Mammary epithelial cell (primary cell): ENCODE measurements at regions of chr12 and their contacts with region 1.

Region 1: DNA sequence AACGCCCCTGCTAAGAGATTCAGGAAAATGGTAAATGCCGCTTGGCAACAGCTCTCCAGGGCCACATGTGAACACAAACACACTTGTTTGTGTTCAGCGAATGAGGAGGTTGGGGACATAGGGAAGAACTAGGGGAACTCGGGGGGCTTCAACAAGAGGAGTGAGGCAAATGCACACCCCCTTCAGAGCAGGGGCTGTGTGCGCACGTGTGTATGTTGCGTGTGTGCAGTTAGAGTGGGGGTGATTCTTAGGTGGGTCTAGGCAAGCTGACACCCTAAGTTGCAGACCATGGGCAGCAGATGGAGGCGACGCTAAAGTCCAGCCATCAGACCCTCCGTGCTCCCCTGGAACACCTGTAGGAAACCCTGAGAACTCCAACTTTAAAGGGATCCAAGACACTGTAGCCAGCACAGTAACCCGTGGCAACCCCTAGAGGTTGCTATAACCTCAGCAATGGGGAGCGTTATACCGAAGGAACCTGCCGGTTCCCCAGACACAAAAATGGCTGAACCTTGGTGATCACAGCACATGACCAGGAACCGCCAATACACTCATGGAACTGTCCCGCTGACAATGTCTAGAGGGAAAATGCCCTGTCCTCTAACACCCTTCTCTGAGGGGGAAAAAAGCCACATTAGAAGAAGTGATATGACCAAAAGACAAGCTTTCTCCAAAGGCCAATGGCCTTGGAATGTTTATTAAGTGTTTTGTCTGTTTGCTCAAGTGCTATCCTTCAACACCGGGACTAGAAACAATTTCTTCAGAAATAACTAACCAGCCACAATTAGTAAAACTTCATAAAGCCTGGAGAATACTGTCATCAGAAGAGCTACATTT is 86.5 kb upstream of the CEP83 start:
- DNase-seq: peak; percentile 65
- H3K4me3 ChIP-seq: no peak overlapping the region
- H3K27ac ChIP-seq: no peak overlapping the region
- H3K4me1 ChIP-seq: peaks cover 5% of the 10 kb centered on the region
- H3K27me3 ChIP-seq: no peaks in the 10 kb centered on the region
- CTCF ChIP-seq: peak; percentile 88 to 95

Region 2: DNA sequence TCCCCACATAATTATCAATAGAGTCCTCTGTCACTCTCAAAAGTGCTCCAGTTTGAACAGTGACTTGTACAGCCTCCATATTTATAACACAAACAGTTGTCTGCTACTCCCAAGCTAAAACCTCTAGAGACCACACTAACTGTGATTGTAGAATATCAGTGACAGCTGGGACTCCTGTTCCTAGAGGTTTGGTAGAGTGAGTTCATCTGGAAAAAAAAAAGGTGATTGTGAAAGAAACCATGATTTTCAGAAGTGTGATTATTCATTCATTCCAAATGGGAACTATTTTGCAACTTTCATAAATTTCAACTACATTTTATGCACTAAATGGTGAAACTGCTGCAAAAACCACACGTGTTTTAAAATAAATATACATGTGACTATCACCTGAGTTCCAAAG is 525.8 kb before region 1 on chr12:
- CTCF ChIA-PET with region 1: no interaction called
- dilution Hi-C with region 1: no loop called
- in situ Hi-C with region 1: no loop called
- intact Hi-C with region 1: no loop called
- DNase-seq: no peak
- H3K4me3 ChIP-seq: no peak overlapping the region
- H3K27ac ChIP-seq: no peak overlapping the region
- H3K4me1 ChIP-seq: no peaks in the 10 kb centered on the region
- H3K27me3 ChIP-seq: no peaks in the 10 kb centered on the region
- CTCF ChIP-seq: no peak

Region 3: DNA sequence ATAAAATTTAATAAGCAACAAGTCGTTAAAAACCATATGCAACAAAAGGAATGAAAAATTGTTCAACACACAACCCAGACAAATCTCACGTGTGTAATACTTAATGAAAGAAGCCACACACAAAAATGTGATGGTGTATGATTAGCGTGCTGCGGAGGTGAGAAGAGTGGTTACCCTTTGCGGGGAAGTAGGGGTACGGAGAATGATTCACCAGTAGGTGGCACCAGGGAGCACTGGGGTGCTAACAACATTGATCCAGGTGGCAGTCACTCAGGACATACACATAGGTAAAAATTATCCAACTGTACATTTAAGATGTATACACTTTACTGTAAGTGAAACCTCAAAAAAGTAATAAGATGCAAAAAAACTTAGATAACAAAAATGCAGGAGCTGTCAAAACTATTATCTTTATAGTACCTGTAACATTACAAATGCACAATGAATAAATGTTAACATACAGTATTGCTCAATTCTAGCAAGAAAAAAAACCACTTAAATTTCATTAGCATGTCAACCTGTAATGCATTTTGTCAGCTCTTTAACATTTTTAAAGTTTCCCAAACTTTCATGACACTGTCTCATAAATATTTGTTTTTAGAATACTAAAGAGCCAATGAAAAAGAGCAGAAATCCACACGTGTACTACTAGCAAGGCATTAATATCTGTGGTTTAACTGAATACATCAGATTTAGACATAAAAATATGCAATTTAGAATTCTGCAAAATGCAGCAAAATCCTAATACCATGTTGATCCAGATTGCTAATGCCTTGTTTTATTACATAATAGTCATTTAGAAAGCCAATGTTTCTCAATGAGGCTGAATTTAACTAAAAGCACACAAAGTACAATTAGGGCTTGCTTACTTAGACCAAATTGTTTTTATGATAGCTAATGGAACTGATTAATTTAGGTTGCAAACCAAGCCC is 57.5 kb after region 1 on chr12:
- CTCF ChIA-PET with region 1: no interaction called
- dilution Hi-C with region 1: no loop called
- in situ Hi-C with region 1: no loop called
- intact Hi-C with region 1: loop called (anchors 5 kb)
- DNase-seq: no peak
- H3K4me3 ChIP-seq: no peak overlapping the region
- H3K27ac ChIP-seq: no peak overlapping the region
- H3K4me1 ChIP-seq: peaks cover 6% of the 10 kb centered on the region
- H3K27me3 ChIP-seq: no peaks in the 10 kb centered on the region
- CTCF ChIP-seq: peak; percentile 62 to 83

Region 4: DNA sequence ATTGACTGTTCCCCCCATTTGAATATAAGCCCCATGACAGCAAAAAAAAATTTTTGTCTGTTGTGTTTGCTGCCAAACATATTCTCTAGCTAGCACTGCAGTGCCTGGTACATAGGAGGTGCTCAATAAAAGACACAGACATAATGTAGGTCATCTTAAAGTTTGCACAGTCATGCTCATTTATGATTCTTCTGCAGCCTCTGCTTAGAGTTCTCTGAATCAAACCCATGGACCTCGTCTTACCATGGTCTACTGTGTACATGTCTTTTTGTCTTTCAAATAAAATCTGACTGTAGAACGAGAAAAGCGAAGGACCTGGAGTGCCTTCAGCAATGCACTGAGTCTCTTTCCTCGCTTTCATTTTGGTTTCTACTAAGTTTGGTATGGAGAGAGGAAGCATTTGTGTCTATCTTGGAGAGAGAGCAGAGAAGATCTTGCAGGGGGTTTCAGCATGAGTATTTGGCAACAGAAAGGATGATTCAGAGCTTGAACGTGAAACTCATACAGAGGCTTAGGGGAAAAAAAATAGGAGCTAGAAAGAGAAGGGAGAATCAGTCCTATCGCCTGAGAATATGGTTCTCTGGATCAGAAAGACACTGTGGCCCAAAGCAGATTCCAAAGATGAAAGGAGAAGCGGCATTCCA is 143.0 kb after region 1 on chr12:
- CTCF ChIA-PET with region 1: no interaction called
- dilution Hi-C with region 1: no loop called
- in situ Hi-C with region 1: no loop called
- intact Hi-C with region 1: no loop called
- DNase-seq: peak; percentile 38
- H3K4me3 ChIP-seq: no peak overlapping the region
- H3K27ac ChIP-seq: no peak overlapping the region
- H3K4me1 ChIP-seq: no peaks in the 10 kb centered on the region
- H3K27me3 ChIP-seq: no peaks in the 10 kb centered on the region
- CTCF ChIP-seq: no peak

Region 5: DNA sequence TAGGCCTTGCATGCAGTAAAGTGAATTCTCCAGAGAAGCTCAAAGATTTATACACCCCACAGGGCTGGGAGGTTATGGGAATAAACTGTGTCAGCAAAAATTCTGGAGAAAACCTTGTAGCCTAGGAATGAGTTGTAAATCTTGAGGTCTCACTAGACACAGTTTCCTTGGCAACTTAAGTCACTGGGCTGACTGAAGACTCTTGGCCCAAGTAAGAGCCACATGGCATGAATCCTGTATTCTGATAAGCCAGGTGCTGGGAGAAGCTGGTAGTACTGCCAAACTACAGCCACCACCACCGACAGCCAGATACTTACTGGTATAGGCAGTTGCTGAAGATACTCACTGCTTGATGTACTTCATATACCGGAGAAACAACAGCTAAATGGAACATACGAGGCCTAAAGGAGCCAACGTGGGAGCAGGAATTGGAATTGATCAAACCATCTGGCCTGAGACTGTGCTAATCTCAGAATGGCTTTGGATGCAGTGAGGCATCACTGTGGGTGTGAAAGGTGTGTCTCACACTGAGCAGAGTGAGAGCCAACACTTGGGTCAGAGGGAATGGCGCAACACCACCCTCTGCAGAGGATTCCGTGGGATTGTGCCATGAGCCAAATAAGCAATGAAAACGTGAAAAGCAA is 207.0 kb after region 1 on chr12:
- CTCF ChIA-PET with region 1: no interaction called
- dilution Hi-C with region 1: loop called (anchors 25 kb)
- in situ Hi-C with region 1: loop called in 1 of 2 experiments (anchors 10 kb)
- intact Hi-C with region 1: loop called (anchors 1 kb)
- DNase-seq: peak; percentile 70
- H3K4me3 ChIP-seq: no peak overlapping the region
- H3K27ac ChIP-seq: no peak overlapping the region
- H3K4me1 ChIP-seq: no peaks in the 10 kb centered on the region
- H3K27me3 ChIP-seq: no peaks in the 10 kb centered on the region
- CTCF ChIP-seq: peak; percentile 7 to 44

Region 6: GRCh38 chr12:95034750-95035149 is 488.6 kb after region 1 on chr12:
- CTCF ChIA-PET with region 1: no interaction called
- dilution Hi-C with region 1: no loop called
- in situ Hi-C with region 1: no loop called
- intact Hi-C with region 1: no loop called
- DNase-seq: no peak
- H3K4me3 ChIP-seq: no peak overlapping the region
- H3K27ac ChIP-seq: no peak overlapping the region
- H3K4me1 ChIP-seq: no peaks in the 10 kb centered on the region
- H3K27me3 ChIP-seq: no peaks in the 10 kb centered on the region
- CTCF ChIP-seq: no peak

Region 7: GRCh38 chr12:95072900-95073697 is 526.9 kb after region 1 on chr12 and contains the start of gene NR2C1:
- CTCF ChIA-PET with region 1: no interaction called
- dilution Hi-C with region 1: no loop called
- in situ Hi-C with region 1: loop called in 1 of 2 experiments (anchors 25 kb)
- intact Hi-C with region 1: loop called (anchors 1 kb)
- DNase-seq: peak; percentile 87
- H3K4me3 ChIP-seq: peak within 1 kb of the TSS; percentile 90 to 94 (median 92)
- H3K27ac ChIP-seq: peak within 1 kb of the TSS; percentile 84
- H3K4me1 ChIP-seq: peaks cover 5% of the 10 kb centered on the region
- H3K27me3 ChIP-seq: no peaks in the 10 kb centered on the region
- CTCF ChIP-seq: no peak
- total RNA-seq, gene NR2C1: 23.2 to 32.8 TPM

Region 8: GRCh38 chr12:95532851-95533250 is 986.7 kb after region 1 on chr12:
- CTCF ChIA-PET with region 1: no interaction called
- dilution Hi-C with region 1: no loop called
- in situ Hi-C with region 1: loop called in 1 of 2 experiments (anchors 25 kb)
- intact Hi-C with region 1: loop called (anchors 5 kb)
- DNase-seq: peak; percentile 62
- H3K4me3 ChIP-seq: no peak overlapping the region
- H3K27ac ChIP-seq: no peak overlapping the region
- H3K4me1 ChIP-seq: peaks cover 5% of the 10 kb centered on the region
- H3K27me3 ChIP-seq: no peaks in the 10 kb centered on the region
- CTCF ChIP-seq: no peak